Psoas muscle (tissue), 8 donors: ENCODE measurements at regions of chr1 and their contacts with region 1.

Region 1: GRCh38 chr1:203686091-203686632 is 59.5 kb downstream of the ATP2B4 start:
- DNase-seq: no peak
- ATAC-seq: peak in 1 of 4 donors; percentile 16
- H3K4me3 ChIP-seq: no peak overlapping the region
- H3K27ac ChIP-seq: no peak overlapping the region
- H3K4me1 ChIP-seq: peaks cover 15% of the 10 kb centered on the region
- H3K27me3 ChIP-seq: no peaks in the 10 kb centered on the region
- CTCF ChIP-seq: no peak

Region 2: GRCh38 chr1:203643213-203644045 is 42.7 kb before region 1 on chr1:
- intact Hi-C with region 1: loop called in 1 of 2 experiments (anchors 5 kb)
- DNase-seq: no peak
- ATAC-seq: peak in 1 of 4 donors; percentile 17
- H3K4me3 ChIP-seq: no peak overlapping the region
- H3K27ac ChIP-seq: peak overlapping the region; percentile 31
- H3K4me1 ChIP-seq: peaks cover 9% of the 10 kb centered on the region
- H3K27me3 ChIP-seq: no peaks in the 10 kb centered on the region
- CTCF ChIP-seq: no peak

Region 3: DNA sequence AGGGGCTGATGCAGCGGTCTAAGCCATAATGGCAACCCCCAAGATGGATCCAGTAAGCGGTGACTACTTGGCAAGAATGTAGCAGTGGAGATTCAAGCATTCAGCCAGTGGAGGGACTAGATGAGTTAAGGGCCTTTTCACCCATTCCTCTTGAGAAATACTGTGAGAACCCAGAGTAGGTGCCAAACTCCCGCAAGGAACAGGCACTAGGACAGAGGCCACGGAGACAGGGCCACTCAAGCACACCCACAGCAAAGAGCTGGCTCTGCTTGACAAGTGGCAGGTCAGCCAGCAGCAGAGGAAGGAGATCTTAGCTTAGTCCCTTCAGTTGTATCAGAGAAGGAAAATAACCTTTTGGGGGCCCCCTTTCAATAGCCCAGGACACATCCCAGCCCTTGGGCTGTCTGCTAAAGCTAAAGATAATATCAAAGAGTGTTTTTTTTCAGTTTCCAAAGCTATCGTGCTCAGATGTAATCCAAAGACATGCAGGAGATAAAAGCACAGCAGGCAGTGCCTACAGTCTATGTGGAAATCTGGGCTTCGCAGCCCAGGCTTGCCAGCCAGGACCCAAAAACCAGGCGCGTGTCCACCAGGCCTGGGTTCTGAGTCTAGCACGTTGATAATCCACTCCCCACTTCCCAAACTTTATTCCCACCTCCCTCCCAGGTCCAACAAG is 589.7 kb after region 1 on chr1:
- intact Hi-C with region 1: no loop called
- DNase-seq: no peak
- ATAC-seq: peak in 1 of 4 donors; percentile 35
- H3K4me3 ChIP-seq: no peak overlapping the region
- H3K27ac ChIP-seq: no peak overlapping the region
- H3K4me1 ChIP-seq: no peaks in the 10 kb centered on the region
- H3K27me3 ChIP-seq: peaks cover 0 to 9% (median 3%) of the 10 kb centered on the region in 3 donors
- CTCF ChIP-seq: no peak